RWPE1 (cell line): ENCODE measurements at regions of chr17 and their contacts with region 1.

Region 1: GRCh38 chr17:53626286-53626685 is 196.4 kb upstream of the KIF2B start:
- DNase-seq: peak; percentile 19
- H3K27ac ChIP-seq: no peak overlapping the region
- CTCF ChIP-seq: no peak

Region 2: GRCh38 chr17:53570731-53571130 is 55.6 kb before region 1 on chr17:
- CTCF ChIA-PET with region 1: no interaction called
- POLR2A ChIA-PET with region 1: interaction called, 10 read pairs
- DNase-seq: no peak
- H3K27ac ChIP-seq: no peak overlapping the region
- CTCF ChIP-seq: no peak

Region 3: GRCh38 chr17:53687324-53687723 is 61.0 kb after region 1 on chr17:
- CTCF ChIA-PET with region 1: no interaction called
- POLR2A ChIA-PET with region 1: no interaction called
- DNase-seq: no peak
- H3K27ac ChIP-seq: no peak overlapping the region
- CTCF ChIP-seq: no peak